Activated T-helper 1 cell treated with anti-CD3 and anti-CD28 coated beads, Interleukin-12 subunit alpha, Interleukin-12 subunit beta, Interleukin-2, Interleukin-4 antibody, amounts not matched to agents 30 ng/mL and 10 ng/mL and 1 ng/mL, durations not matched to agents 14 hours and 24 hours and 36 hours (primary cell): ENCODE measurements at regions of chr1 and their contacts with region 1.

Region 1: GRCh38 chr1:228794173-228794572 is 58.9 kb downstream of the RHOU start:
- DNase-seq: peak; percentile 49
- H3K4me3 Mint-ChIP-seq: no peak overlapping the region
- H3K27ac Mint-ChIP-seq: no peak overlapping the region
- H3K4me1 Mint-ChIP-seq: peaks cover 27% of the 10 kb centered on the region
- H3K27me3 Mint-ChIP-seq: no peaks in the 10 kb centered on the region

Region 2: DNA sequence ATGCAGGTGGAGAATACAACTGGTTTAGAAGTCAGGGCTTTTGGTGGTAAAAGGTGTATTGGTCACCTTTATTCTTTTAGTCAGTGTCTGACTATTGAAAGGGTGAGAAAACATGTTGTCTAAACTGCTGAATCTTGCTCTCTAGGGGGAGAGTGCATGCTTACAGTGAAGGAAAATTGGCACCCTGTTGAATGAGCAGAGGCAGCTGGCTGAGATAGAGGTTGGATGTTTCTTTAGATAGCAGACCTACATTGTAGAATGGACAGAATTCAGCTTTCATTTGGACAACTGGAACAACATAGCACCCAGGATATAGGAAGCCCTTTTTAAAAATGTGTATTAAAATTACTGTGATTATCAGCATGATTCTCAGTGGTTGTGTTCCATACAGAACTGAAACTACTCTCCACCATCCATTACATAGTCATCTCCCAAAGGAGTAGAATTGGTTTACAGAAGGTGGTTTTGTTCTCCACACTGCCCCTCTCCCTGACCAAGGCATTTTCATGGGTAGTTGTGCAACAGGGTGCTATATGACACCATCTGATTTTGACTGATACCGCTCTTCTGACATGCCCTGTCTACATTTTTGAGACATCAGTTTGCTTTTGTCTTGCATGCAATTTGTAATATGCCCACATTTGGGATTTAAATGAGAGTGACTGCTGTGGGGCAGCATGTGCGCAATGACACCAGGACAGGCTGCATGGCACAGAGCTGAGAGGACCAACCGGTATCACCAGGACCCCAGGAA is 42.6 kb before region 1 on chr1:
- intact Hi-C with region 1: loop called (anchors 1 kb)
- DNase-seq: no peak
- H3K4me3 Mint-ChIP-seq: no peak overlapping the region
- H3K27ac Mint-ChIP-seq: no peak overlapping the region
- H3K4me1 Mint-ChIP-seq: peaks cover 42% of the 10 kb centered on the region
- H3K27me3 Mint-ChIP-seq: peaks cover 39% of the 10 kb centered on the region

Region 3: GRCh38 chr1:228810878-228811711 is 16.9 kb after region 1 on chr1:
- intact Hi-C with region 1: loop called (anchors 1 kb)
- DNase-seq: peak; percentile 37
- H3K4me3 Mint-ChIP-seq: peak overlapping the region; percentile 40
- H3K27ac Mint-ChIP-seq: peak overlapping the region; percentile 69
- H3K4me1 Mint-ChIP-seq: peaks cover 56% of the 10 kb centered on the region
- H3K27me3 Mint-ChIP-seq: no peaks in the 10 kb centered on the region

Region 4: DNA sequence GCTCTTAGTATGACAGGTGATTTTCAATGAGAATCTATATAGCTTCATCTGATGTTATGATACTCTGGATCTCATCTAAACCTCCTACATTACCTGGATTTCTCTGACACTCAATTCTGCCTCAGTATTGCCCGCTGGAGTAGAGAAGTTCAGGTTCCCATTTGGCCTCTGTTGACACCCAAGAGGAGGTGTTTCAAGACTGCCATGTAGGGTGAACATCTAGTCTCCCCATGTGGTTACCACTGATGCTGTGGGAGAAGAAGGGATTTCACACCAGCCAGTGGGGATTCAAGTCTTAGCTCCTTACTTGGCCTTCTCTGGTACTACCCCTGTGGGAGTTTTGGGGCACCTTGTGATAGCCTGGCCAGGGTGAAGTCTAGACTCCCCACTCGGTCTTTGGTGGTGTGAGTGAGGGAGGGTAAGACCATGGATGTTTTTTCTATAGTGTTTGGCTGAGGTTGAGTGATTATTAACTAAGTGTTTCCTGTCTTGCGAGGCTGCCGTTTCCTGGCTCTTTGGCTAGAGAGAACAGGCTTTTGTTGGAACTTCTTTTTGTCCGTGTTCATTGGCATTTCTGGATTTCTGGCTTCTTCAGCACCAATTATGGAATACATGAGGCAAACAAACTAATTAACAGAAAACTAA is 31.8 kb after region 1 on chr1:
- intact Hi-C with region 1: loop called (anchors 2 kb)
- DNase-seq: no peak
- H3K4me3 Mint-ChIP-seq: no peak overlapping the region
- H3K27ac Mint-ChIP-seq: no peak overlapping the region
- H3K4me1 Mint-ChIP-seq: peaks cover 53% of the 10 kb centered on the region
- H3K27me3 Mint-ChIP-seq: peaks cover 16% of the 10 kb centered on the region

Region 5: DNA sequence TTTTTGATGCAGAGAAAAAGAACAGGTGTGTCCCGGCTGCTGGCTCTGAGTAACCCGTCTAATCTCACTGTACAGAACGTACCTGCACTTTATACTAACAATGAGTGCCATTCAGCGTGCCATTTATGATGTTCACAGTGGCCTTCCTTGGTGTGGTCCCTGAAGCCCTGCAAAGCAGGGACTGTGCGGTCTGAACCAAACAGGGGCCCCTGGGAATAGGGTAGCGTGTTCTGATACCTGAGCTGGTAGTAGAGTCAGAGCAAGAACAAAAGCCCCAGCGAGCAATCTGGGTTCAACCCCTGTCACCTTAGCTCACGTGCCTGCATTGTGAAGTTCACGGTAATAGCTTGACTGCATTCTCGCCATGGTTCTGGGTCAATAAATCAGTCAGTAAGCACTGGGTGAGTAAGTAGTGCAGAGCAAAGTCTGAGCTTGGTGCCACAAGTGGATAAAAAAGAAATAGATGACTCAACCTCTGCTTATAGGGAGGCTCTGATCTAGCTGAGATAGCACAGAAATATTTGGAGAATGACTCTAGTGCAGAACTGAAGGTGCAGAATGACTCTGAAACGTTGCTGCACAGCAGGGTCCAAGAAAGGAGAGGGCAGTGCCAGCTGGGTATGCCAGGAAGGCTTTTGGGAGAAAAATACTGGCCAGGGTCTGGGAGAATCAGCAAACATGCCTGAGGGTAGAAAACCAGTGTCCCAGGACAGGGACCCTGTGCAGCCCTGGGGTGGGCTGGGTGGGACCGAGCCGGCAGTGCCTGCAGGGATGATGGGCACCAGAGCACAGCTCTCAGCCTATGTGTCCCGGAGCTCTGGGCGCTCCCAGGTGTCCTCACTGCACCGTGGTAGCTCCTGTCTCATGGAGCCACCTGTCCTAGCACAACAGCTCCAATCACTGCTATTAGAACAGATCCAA is 67.0 kb after region 1 on chr1:
- intact Hi-C with region 1: loop called (anchors 1 kb)
- DNase-seq: no peak
- H3K4me3 Mint-ChIP-seq: no peak overlapping the region
- H3K27ac Mint-ChIP-seq: no peak overlapping the region
- H3K4me1 Mint-ChIP-seq: peaks cover 37% of the 10 kb centered on the region
- H3K27me3 Mint-ChIP-seq: peaks cover 21% of the 10 kb centered on the region